Mammary epithelial cell (primary cell): ENCODE measurements at regions of chr22 and their contacts with region 1.

Region 1: DNA sequence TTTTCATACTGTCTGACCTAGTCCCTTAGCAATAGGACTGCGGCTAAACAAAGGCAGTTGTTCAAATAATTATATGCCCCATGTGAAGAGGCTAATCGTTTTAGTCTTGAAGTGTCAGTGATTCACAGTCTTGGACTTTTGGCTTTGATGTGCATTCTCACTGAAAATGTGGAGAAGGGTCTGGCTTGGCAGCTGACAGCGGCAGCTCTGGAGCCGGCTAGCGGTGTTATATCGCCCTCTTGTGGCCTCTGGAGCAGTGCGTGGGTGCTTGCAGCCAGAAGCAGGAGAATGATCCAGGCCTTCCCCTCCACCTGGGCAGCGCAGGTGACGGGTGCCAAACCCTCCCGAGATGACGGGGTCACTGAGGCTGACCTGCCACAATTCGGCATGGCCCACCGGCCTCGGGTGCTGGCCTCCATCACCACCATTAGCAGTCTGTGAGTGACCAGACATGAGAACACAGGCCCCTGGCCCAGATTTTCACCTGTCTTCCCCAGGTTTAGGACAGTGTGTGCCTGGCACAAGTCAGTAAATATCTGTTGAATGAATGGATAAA is 90.3 kb upstream of the PITPNB start:
- DNase-seq: peak; percentile 54
- H3K4me3 ChIP-seq: no peak overlapping the region
- H3K27ac ChIP-seq: no peak overlapping the region
- H3K4me1 ChIP-seq: peaks cover 3% of the 10 kb centered on the region
- H3K27me3 ChIP-seq: no peaks in the 10 kb centered on the region
- CTCF ChIP-seq: peak; percentile 93 to 98

Region 2: GRCh38 chr22:27730654-27731433 is 278.5 kb before region 1 on chr22:
- CTCF ChIA-PET with region 1: no interaction called
- dilution Hi-C with region 1: no loop called
- in situ Hi-C with region 1: no loop called
- intact Hi-C with region 1: no loop called
- DNase-seq: no peak
- H3K4me3 ChIP-seq: no peak overlapping the region
- H3K27ac ChIP-seq: no peak overlapping the region
- H3K4me1 ChIP-seq: no peaks in the 10 kb centered on the region
- H3K27me3 ChIP-seq: no peaks in the 10 kb centered on the region
- CTCF ChIP-seq: no peak

Region 3: DNA sequence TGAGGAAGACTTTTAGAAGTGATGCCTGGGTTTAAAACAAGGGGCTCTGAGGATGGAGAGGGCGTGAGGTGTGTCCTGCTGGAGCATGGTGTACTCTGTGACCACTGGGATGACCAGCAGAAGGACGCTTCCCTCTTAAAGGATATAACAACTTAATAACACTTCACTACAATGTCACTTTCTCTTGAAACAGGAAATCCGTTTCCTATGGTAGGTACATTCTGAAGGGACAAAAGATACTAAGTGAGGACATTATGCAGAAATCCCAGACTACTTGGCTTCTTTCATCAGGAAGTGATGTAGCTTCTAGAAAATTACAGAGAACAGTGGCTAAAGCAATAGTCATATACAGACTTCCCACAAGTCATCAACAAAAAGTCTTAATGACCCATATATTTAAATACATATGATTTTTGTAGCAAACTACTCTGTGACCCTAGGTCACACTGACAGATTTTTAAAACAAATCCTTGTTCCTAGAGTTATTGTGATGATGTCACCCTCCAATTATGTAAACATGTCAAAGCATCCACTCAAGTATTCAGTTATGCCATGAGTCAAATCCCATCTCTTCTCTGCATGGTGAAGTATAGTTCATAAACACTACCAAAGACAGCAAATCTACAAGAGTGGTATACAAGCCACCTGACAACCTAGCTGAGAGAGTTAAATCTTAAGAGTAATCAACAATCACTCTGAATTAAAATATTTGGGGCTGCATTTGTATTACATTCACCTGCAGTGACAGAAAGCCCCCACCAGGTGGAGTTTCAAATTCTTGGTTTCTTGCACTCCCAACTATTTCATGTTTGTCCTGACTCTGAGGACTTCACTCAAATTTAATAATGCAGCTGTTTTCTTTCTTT is 123.1 kb before region 1 on chr22:
- CTCF ChIA-PET with region 1: no interaction called
- dilution Hi-C with region 1: no loop called
- in situ Hi-C with region 1: loop called (anchors 5 kb)
- intact Hi-C with region 1: loop called (anchors 1 kb)
- DNase-seq: peak; percentile 52
- H3K4me3 ChIP-seq: no peak overlapping the region
- H3K27ac ChIP-seq: no peak overlapping the region
- H3K4me1 ChIP-seq: peaks cover 26% of the 10 kb centered on the region
- H3K27me3 ChIP-seq: no peaks in the 10 kb centered on the region
- CTCF ChIP-seq: peak; percentile 75 to 79

Region 4: GRCh38 chr22:27919222-27919941 is 90.0 kb before region 1 on chr22 and contains the start of gene PITPNB:
- CTCF ChIA-PET with region 1: no interaction called
- dilution Hi-C with region 1: no loop called
- in situ Hi-C with region 1: no loop called
- intact Hi-C with region 1: loop called (anchors 2 kb)
- DNase-seq: peak; percentile 98
- H3K4me3 ChIP-seq: peak within 1 kb of the TSS; percentile 79 to 90 (median 83)
- H3K27ac ChIP-seq: peak within 1 kb of the TSS; percentile 87
- H3K4me1 ChIP-seq: peaks cover 20% of the 10 kb centered on the region
- H3K27me3 ChIP-seq: no peaks in the 10 kb centered on the region
- CTCF ChIP-seq: no peak
- total RNA-seq, gene PITPNB: 33.5 to 125 TPM

Region 5: DNA sequence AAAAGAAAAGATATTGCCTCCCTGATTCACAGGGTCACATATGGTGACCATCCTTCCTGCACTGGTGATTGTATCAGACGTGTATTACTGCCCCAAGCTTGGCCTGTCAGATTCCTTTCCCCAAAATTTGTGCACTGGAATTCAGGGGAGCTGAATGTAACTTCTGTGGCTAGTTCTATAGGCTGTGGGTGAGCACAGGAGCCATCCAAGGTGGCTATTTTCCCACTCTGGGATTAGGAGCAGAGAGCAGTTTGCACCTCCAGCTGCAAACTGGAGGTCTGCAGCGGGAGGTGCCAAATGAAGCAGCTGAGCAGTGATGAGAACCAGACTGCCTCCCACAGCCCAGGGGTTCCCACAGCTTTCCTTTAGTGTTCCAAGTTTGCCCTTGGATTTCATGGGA is 33.9 kb after region 1 on chr22:
- CTCF ChIA-PET with region 1: no interaction called
- dilution Hi-C with region 1: no loop called
- in situ Hi-C with region 1: no loop called
- intact Hi-C with region 1: no loop called
- DNase-seq: no peak
- H3K4me3 ChIP-seq: no peak overlapping the region
- H3K27ac ChIP-seq: no peak overlapping the region
- H3K4me1 ChIP-seq: no peaks in the 10 kb centered on the region
- H3K27me3 ChIP-seq: no peaks in the 10 kb centered on the region
- CTCF ChIP-seq: no peak